HepG2 (cell line): ENCODE measurements at regions of chr20 and their contacts with region 1.

Region 1: GRCh38 chr20:54132612-54133433 is 41.0 kb downstream of the CYP24A1 start:
- DNase-seq: peak; percentile 100
- ATAC-seq: peak; percentile 93
- H3K4me3 ChIP-seq: peak overlapping the region; percentile 0 to 54 (median 7); a peak in 2 of 6 replicates
- H3K27ac ChIP-seq: peak overlapping the region; percentile 99
- H3K4me1 ChIP-seq: peaks cover 56% of the 10 kb centered on the region
- H3K27me3 ChIP-seq: no peaks in the 10 kb centered on the region
- CTCF ChIP-seq: no peak
- EP300 ChIP-seq: peak; percentile 99
- POLR2A ChIP-seq: peak; percentile 9 to 80; a peak in 3 of 4 replicates
- RAD21 ChIP-seq: peak; percentile 63

Region 2: DNA sequence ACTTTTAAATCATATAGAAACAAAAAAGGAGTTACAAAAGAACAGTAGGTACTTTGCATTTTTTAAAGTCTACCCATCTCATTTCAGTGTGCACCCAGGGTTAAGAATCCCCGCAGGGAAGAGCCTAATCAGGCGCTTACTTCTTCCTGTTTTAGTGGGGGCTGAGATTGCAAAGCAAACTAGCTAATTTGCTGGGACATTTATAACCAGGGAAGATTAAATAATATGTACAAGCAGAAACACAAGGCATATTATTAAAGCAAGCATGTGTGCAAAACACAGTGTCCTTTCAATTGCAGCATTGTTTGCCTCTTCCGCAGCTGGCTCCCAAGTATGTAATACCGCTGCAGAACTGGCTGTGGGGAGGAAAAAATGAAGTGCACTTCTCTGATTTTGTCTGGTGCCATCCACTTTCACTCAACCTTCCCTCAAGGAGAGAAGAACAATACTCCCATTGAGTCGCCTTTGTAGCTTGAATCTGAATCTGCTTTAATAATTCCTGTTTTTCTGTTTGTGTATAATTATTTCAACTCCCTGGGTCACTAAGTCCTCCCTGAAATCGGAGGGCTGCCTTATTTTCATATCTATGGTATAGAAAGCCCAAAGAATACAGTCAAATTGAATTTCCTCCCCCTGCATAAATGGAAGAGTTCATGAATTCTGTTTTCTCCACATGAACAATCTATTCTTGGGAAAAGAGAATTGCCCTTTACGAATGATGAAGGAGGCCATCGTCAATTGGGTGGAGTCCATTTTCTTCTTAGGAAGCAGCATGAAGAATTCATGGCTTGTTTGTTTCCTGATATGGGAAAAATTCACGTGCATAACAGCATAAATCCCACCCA is 39.2 kb before region 1 on chr20:
- CTCF ChIA-PET with region 1: interaction called, 4 read pairs
- POLR2A ChIA-PET with region 1: interaction called, 14 read pairs
- in situ Hi-C with region 1: no loop called
- intact Hi-C with region 1: no loop called
- DNase-seq: no peak
- ATAC-seq: no peak
- H3K4me3 ChIP-seq: no peak overlapping the region
- H3K27ac ChIP-seq: no peak overlapping the region
- H3K4me1 ChIP-seq: peaks cover 23% of the 10 kb centered on the region
- H3K27me3 ChIP-seq: peaks cover 0 to 6% of the 10 kb centered on the region in 2 experiments; a peak in 1 of 5 replicates
- CTCF ChIP-seq: no peak
- EP300 ChIP-seq: no peak
- POLR2A ChIP-seq: no peak
- RAD21 ChIP-seq: no peak

Region 3: DNA sequence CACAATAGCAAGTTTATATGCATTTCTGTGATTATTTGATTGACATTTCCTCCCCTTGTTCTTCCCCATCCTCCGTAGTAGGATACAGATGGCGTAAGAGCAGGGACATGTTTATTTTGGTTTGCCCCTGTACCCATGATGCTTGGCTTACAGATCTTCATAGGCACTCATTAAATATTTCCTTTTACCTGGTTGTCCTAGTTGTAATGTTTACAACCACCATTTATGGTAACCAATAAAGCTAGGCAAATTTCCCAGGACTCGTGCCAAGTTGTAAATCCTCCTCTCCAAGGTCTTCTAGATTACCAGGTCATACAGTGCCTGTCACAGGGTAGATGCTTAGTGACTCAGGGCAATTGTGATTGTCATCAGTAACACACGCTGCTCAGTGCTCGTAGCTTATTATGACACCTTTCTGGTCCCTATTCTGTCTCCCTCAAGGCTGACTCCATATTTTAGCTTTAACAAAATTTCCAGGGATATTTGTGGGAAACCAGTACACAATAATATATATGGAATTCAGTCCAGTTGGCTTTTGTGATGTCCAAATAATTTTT is 16.2 kb after region 1 on chr20:
- CTCF ChIA-PET with region 1: no interaction called
- POLR2A ChIA-PET with region 1: interaction called, 19 read pairs
- in situ Hi-C with region 1: no loop called
- intact Hi-C with region 1: no loop called
- DNase-seq: peak; percentile 94
- ATAC-seq: peak; percentile 66
- H3K4me3 ChIP-seq: no peak overlapping the region
- H3K27ac ChIP-seq: no peak overlapping the region
- H3K4me1 ChIP-seq: peaks cover 24% of the 10 kb centered on the region
- H3K27me3 ChIP-seq: no peaks in the 10 kb centered on the region
- CTCF ChIP-seq: no peak
- EP300 ChIP-seq: 0 out of 4 replicates have a peak, but pooled peaks of 1 of the 2 experiments have one; percentile 10
- POLR2A ChIP-seq: no peak
- RAD21 ChIP-seq: no peak

Region 4: GRCh38 chr20:54199721-54200176 is 66.9 kb after region 1 on chr20:
- CTCF ChIA-PET with region 1: interaction called, 3 read pairs
- POLR2A ChIA-PET with region 1: interaction called, 64 read pairs
- in situ Hi-C with region 1: loop called (anchors 10 kb)
- intact Hi-C with region 1: loop called (anchors 1 kb)
- DNase-seq: peak; percentile 82
- ATAC-seq: no peak
- H3K4me3 ChIP-seq: no peak overlapping the region
- H3K27ac ChIP-seq: no peak overlapping the region
- H3K4me1 ChIP-seq: peaks cover 51% of the 10 kb centered on the region
- H3K27me3 ChIP-seq: peaks cover 0 to 11% of the 10 kb centered on the region in 2 experiments; a peak in 1 of 5 replicates
- CTCF ChIP-seq: peak; percentile 95
- EP300 ChIP-seq: no peak
- POLR2A ChIP-seq: no peak
- RAD21 ChIP-seq: peak; percentile 97